Activated CD4-positive, alpha-beta T cell treated with anti-CD3 and anti-CD28 coated beads, Interleukin-2, amount 10 ng/mL, durations not matched to agents 24 days and 14 days (primary cell): ENCODE measurements at regions of chrX and their contacts with region 1.

Region 1: GRCh38 chrX:51641421-51642021 is 22.8 kb upstream of the CENPVL3 start:
- DNase-seq: peak; percentile 59
- H3K4me3 Mint-ChIP-seq: no peak overlapping the region
- H3K27ac Mint-ChIP-seq: no peak overlapping the region
- H3K4me1 Mint-ChIP-seq: no peaks in the 10 kb centered on the region
- H3K27me3 Mint-ChIP-seq: peaks cover 10% of the 10 kb centered on the region

Region 2: DNA sequence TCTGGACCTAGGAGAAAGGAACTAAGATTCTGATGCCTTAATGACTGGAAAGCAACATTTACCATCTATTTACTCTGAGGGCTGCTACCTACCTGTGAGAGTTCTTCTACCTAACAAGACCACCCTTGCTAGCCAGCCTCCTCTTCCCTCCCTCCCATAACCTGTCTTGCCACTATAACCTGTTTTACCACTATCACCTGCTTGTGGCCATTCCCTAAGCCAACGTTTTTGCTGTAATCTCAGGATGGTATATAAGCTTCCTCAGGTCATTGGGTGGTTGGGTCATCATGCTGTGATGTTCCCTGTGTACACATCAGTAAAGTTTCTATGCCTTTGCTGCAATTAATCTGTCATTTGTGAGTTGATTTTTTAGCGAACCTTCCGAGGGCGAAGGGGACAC is 472.1 kb before region 1 on chrX:
- intact Hi-C with region 1: no loop called
- DNase-seq: no peak
- H3K4me3 Mint-ChIP-seq: no peak overlapping the region
- H3K27ac Mint-ChIP-seq: no peak overlapping the region
- H3K4me1 Mint-ChIP-seq: no peaks in the 10 kb centered on the region
- H3K27me3 Mint-ChIP-seq: no peaks in the 10 kb centered on the region

Region 3: GRCh38 chrX:51406688-51407461 is 234.6 kb before region 1 on chrX:
- intact Hi-C with region 1: no loop called
- DNase-seq: no peak
- H3K4me3 Mint-ChIP-seq: no peak overlapping the region
- H3K27ac Mint-ChIP-seq: no peak overlapping the region
- H3K4me1 Mint-ChIP-seq: no peaks in the 10 kb centered on the region
- H3K27me3 Mint-ChIP-seq: no peaks in the 10 kb centered on the region

Region 4: DNA sequence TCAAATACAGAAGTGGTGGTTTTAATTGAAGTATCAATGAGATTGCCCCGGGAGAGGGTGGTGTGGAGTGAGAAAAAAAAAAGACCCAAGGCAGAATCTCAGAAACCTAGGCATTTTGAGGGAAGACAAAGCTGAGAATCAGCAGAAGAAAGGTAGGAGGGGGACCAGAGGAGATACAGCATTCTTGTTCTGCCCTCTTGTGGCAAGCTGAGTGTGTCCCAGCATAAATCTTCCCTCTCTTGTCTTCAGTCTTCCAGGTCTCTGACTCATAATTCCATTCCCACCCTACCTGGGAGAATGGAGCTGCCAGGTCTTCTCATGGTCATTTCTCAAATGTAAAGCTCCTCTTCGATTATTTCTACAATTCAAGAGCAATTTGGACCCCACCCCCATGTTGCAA is 219.2 kb after region 1 on chrX:
- intact Hi-C with region 1: loop called (anchors 5 kb)
- DNase-seq: peak; percentile 61
- H3K4me3 Mint-ChIP-seq: no peak overlapping the region
- H3K27ac Mint-ChIP-seq: no peak overlapping the region
- H3K4me1 Mint-ChIP-seq: peaks cover 5% of the 10 kb centered on the region
- H3K27me3 Mint-ChIP-seq: no peaks in the 10 kb centered on the region

Region 5: GRCh38 chrX:52078131-52078530 is 436.6 kb after region 1 on chrX:
- intact Hi-C with region 1: no loop called
- DNase-seq: no peak
- H3K4me3 Mint-ChIP-seq: no peak overlapping the region
- H3K27ac Mint-ChIP-seq: no peak overlapping the region
- H3K4me1 Mint-ChIP-seq: no peaks in the 10 kb centered on the region
- H3K27me3 Mint-ChIP-seq: peaks cover 3% of the 10 kb centered on the region